ENCODE measurements at regions of chr11 and their contacts with region 1.

Region 1: GRCh38 chr11:74449369-74449931 is 17.9 kb downstream of the KCNE3 start:
- DNase-seq: peak; percentile 44 to 83
- H3K4me3 ChIP-seq: no peak overlapping the region
- CTCF ChIP-seq: no peak
- POLR2A ChIP-seq: no peak

Region 2: GRCh38 chr11:74255741-74256369 is 193.6 kb before region 1 on chr11:
- intact Hi-C with region 1: loop called (anchors 10 kb)
- DNase-seq: peak in 1 of 2 donors; percentile 89
- H3K4me3 ChIP-seq: no peak overlapping the region
- CTCF ChIP-seq: peak in 2 of 3 donors; percentile 13 to 24
- POLR2A ChIP-seq: no peak

Region 3: DNA sequence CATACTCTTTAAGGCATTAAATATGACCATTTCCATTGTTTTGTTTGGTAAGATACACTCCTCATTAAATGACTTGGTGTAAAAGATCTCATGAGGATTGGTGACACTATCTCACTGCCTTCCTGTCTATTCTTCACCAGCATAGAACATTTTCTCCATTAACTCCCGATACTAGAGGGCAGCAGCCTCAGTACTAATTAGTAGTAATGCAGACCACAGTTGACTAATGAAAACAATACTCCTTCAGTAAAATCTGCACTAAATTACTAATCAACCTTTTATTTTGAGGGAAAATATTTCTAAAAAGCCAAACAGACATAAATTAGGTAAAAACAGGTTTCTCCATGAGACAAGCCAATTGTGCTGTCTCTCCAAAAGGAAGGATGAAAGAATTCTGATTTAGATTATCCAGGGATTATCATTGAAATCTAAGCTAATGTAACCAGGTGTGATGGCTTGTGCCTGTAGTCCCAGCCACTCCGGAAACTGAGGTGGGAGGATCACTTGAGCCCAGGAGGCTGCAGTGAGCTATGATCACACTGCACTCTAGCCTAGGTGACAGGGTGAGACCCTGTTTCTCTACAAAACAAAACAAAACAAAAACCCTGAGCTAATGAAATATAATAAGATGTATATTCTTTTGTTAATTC is 60.6 kb before region 1 on chr11:
- intact Hi-C with region 1: loop called (anchors 2 kb)
- DNase-seq: peak in 1 of 2 donors; percentile 79
- H3K4me3 ChIP-seq: no peak overlapping the region
- CTCF ChIP-seq: no peak
- POLR2A ChIP-seq: no peak

Region 4: GRCh38 chr11:74570266-74571061 is 121.0 kb after region 1 on chr11:
- intact Hi-C with region 1: loop called (anchors 5 kb)
- DNase-seq: peak in 1 of 2 donors; percentile 23
- H3K4me3 ChIP-seq: no peak overlapping the region
- CTCF ChIP-seq: peak in 1 of 3 donors; percentile 48
- POLR2A ChIP-seq: no peak

Measured in lower leg skin (tissue), 4 donors.